ENCODE measurements at regions of chr1 and their contacts with region 1.

Region 1: GRCh38 chr1:62765981-62766380 is 18.0 kb upstream of the ATG4C start:
- DNase-seq: no peak
- ATAC-seq: no peak
- H3K4me3 ChIP-seq: no peak overlapping the region
- H3K27ac ChIP-seq: no peak overlapping the region
- H3K4me1 ChIP-seq: no peaks in the 10 kb centered on the region; a peak in 1 of 5 replicates
- H3K27me3 ChIP-seq: no peaks in the 10 kb centered on the region
- CTCF ChIP-seq: no peak
- EP300 ChIP-seq: no peak
- POLR2A ChIP-seq: no peak
- RAD21 ChIP-seq: no peak

Region 2: DNA sequence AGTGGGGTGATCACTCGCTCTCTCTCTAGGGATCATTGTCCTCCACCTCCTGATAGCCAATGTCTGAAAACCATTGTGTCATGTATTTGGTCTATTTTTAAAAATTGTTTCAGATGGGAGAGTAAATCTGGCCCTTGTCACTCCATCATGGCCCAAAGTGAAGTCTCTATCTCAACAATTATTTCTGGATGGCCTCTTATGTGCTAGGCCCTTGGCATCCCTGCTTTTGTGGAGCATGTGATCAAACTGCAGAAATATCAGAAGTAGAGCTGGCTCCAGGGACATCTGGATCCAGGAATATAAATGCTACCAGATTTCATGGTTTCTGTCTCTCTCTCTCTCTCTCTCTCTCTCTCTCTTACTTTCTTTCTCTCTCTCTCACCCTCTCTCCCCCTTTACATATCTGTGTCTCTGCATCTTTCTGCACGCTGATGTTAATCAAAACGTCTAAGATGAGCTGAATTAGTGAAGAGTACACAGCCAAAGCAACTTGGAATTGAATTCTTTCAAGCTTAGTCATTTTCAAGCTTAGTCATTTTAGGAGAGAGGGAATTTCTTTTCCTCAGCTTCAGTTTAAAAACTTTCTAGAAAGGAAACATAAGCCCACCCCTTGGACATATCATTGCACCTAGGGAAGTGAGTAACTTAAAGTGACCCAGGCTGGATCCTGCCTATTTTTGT is 30.4 kb before region 1 on chr1:
- CTCF ChIA-PET with region 1: no interaction called
- POLR2A ChIA-PET with region 1: no interaction called
- in situ Hi-C with region 1: no loop called
- intact Hi-C with region 1: no loop called
- DNase-seq: no peak
- ATAC-seq: no peak
- H3K4me3 ChIP-seq: no peak overlapping the region
- H3K27ac ChIP-seq: no peak overlapping the region
- H3K4me1 ChIP-seq: no peaks in the 10 kb centered on the region
- H3K27me3 ChIP-seq: no peaks in the 10 kb centered on the region; a peak in 2 of 5 replicates
- CTCF ChIP-seq: no peak
- EP300 ChIP-seq: no peak
- POLR2A ChIP-seq: no peak
- RAD21 ChIP-seq: no peak

Region 3: GRCh38 chr1:62783723-62784508 is 17.9 kb after region 1 on chr1 and contains the start of gene ATG4C:
- CTCF ChIA-PET with region 1: no interaction called
- POLR2A ChIA-PET with region 1: interaction called, 3 read pairs
- in situ Hi-C with region 1: no loop called
- intact Hi-C with region 1: loop called (anchors 2 kb)
- DNase-seq: peak; percentile 88 to 97 (median 90)
- ATAC-seq: peak; percentile 93
- H3K4me3 ChIP-seq: peak within 1 kb of the TSS; percentile 83
- H3K27ac ChIP-seq: peak within 1 kb of the TSS; percentile 99
- H3K4me1 ChIP-seq: peaks cover 0 to 2% of the 10 kb centered on the region in 2 experiments; a peak in 3 of 5 replicates
- H3K27me3 ChIP-seq: no peaks in the 10 kb centered on the region
- CTCF ChIP-seq: no peak
- EP300 ChIP-seq: peak; percentile 44
- POLR2A ChIP-seq: peak; percentile 94
- RAD21 ChIP-seq: no peak
- polyA plus RNA-seq, gene ATG4C: 35.4 to 35.8 TPM

Region 4: DNA sequence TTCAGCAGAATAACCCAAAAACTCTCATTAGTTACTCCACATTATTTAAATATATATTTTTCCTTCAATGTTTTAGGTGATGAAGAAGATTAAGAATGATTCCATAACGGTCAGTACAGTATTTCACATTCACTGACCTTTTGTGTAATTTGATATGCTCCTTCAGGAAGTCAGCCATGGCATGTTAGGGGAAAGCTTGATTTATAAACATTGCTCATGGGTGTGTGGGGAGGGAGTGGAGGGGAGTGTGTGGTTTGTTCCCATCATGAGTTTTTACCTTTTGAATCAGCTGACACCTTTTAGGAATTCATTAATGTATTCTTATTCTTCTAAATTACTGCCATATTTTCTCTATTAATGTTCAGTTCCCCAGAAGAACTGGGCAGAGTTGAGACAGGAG is 258.2 kb after region 1 on chr1:
- CTCF ChIA-PET with region 1: no interaction called
- POLR2A ChIA-PET with region 1: no interaction called
- in situ Hi-C with region 1: no loop called
- intact Hi-C with region 1: no loop called
- DNase-seq: no peak
- ATAC-seq: no peak
- H3K4me3 ChIP-seq: no peak overlapping the region
- H3K27ac ChIP-seq: no peak overlapping the region
- H3K4me1 ChIP-seq: no peaks in the 10 kb centered on the region
- H3K27me3 ChIP-seq: no peaks in the 10 kb centered on the region
- CTCF ChIP-seq: no peak
- EP300 ChIP-seq: no peak
- POLR2A ChIP-seq: no peak
- RAD21 ChIP-seq: no peak